Pancreas (tissue), 10 donors: ENCODE measurements at regions of chr10 and their contacts with region 1.

Region 1: DNA sequence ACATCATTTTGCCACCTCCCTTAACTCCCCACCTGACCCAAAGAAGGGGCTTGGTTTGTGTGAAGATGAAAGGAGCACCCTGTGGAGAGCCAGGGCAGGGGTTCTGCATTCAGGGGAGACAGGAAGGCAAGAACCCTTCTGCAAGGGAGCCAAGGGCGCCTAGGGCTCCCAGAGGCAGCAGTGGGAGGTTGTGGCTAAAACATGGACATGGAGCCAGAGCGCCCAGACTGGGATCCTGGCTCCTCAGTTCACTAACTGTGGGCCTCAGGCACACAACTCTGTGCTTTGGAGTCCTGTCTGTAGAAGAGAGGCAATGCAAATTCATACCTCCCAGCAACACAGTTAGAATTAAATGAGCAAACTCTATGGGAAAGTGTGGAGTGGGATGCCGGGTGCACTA is 123.1 kb upstream of the MACROH2A2 start:
- DNase-seq: no peak
- ATAC-seq: no peak
- H3K4me3 ChIP-seq: no peak overlapping the region
- H3K27ac ChIP-seq: no peak overlapping the region
- H3K4me1 ChIP-seq: no peaks in the 10 kb centered on the region
- H3K27me3 ChIP-seq: peaks cover 0 to 3% (median 0%) of the 10 kb centered on the region in 4 donors
- CTCF ChIP-seq: no peak

Region 2: GRCh38 chr10:69649786-69650555 is 279.6 kb before region 1 on chr10:
- intact Hi-C with region 1: loop called in 1 of 3 experiments (anchors 10 kb)
- DNase-seq: no peak
- ATAC-seq: no peak
- H3K4me3 ChIP-seq: no peak overlapping the region
- H3K27ac ChIP-seq: no peak overlapping the region
- H3K4me1 ChIP-seq: no peaks in the 10 kb centered on the region
- H3K27me3 ChIP-seq: no peaks in the 10 kb centered on the region
- CTCF ChIP-seq: no peak